ENCODE measurements at regions of chr9 and their contacts with region 1.

Region 1: DNA sequence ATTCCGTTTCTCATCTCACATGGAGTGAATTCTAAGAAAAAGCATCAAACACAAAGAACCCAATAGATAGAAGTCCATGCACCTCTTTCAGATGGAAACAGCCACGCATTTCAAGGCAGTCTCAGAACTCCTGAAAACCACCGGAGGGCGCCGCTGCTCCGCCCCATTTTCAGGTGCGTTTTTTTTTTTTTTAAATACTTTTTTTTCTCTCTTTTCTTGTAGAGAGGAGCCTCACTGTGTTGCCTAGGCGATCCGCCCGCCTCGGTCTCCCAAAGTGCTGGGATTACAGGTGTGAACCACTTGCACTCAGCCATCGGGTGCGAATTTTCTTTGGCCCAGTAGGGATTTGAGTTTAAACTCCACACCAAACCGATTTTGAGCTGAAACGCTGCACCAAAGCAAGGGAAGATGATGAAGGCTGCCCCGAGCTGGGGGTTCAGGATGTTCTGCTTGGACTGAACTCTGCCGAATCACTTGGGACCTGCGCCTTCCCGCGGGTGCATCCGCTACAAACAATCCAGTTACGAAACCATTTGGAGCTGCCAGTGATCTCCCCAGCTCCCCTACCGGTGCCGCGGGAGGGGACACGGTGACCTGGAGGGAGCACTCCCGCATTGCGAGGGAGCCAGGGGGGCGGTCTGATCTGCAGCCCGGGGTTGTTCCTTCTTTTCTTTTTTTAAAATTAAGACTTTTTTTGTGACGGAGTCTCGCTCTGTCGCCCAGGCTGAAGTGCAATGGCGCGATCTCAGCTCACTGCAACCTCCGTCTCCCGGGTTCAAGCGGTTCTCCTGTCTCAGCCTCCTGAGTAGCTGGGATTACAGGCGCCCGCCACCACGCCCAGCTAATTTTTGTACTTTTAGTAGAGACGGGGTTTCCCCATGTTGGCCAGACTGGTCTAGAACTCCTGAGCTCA is 1.4 kb downstream of the PTGR1 start:
- DNase-seq: peak; percentile 76
- H3K4me3 Mint-ChIP-seq: peak overlapping the region; percentile 80
- H3K27ac Mint-ChIP-seq: no peak overlapping the region
- H3K4me1 Mint-ChIP-seq: peaks cover 27% of the 10 kb centered on the region
- H3K27me3 Mint-ChIP-seq: peaks cover 54% of the 10 kb centered on the region

Region 2: GRCh38 chr9:111450124-111450523 is 147.9 kb before region 1 on chr9:
- CTCF ChIA-PET with region 1: no interaction called
- DNase-seq: no peak
- H3K4me3 Mint-ChIP-seq: no peak overlapping the region
- H3K27ac Mint-ChIP-seq: no peak overlapping the region
- H3K4me1 Mint-ChIP-seq: no peaks in the 10 kb centered on the region
- H3K27me3 Mint-ChIP-seq: no peaks in the 10 kb centered on the region

Region 3: GRCh38 chr9:111691672-111692329 is 93.7 kb after region 1 on chr9:
- CTCF ChIA-PET with region 1: interaction called, 26 read pairs
- DNase-seq: no peak
- H3K4me3 Mint-ChIP-seq: no peak overlapping the region
- H3K27ac Mint-ChIP-seq: no peak overlapping the region
- H3K4me1 Mint-ChIP-seq: peaks cover 2% of the 10 kb centered on the region
- H3K27me3 Mint-ChIP-seq: no peaks in the 10 kb centered on the region

Region 4: DNA sequence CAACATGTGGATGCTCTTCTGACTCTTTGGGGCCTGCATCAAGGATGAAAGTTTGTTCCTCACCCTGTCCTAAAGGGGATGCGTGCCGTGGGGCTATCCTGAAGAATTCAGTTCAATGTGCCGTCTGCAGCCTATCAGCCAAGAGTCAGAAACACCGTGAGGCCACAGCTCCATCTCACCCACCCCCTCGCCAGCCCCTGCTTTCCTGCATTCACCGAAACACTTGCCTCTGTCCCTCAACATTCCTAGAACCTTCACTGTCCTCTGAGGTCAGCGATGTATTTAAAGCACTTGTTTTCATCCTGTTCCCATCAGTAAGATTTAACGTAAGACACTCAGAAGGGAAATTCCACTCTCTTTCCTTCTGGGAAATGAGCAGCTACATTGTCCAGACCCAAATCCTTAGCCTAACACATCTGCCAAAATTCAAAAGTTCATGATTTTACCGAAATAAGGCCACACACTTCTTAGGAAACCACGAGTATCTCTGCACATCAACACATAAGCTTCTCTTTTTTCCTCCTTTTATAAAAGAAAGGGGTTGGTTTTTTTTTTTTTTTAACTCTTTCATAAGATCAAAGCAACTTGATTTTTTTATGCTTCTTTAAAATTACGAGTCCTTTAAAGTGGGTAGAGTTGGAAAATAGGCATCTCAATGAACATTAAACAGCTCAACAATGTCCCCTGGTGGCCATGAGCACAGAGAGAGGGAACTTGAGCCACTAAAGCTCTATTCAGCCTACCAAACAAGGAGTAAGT is 476.4 kb after region 1 on chr9:
- CTCF ChIA-PET with region 1: interaction called, 29 read pairs
- DNase-seq: peak; percentile 83
- H3K4me3 Mint-ChIP-seq: no peak overlapping the region
- H3K27ac Mint-ChIP-seq: peak overlapping the region; percentile 51
- H3K4me1 Mint-ChIP-seq: peaks cover 27% of the 10 kb centered on the region
- H3K27me3 Mint-ChIP-seq: no peaks in the 10 kb centered on the region

Measured in activated naive CD4-positive, alpha-beta T cell treated with anti-CD3 and anti-CD28 coated beads, Interleukin-2, amount 10 ng/mL, durations not matched to agents 7 days and 5 days (primary cell).